ENCODE measurements at regions of chr22 and their contacts with region 1.

Region 1: DNA sequence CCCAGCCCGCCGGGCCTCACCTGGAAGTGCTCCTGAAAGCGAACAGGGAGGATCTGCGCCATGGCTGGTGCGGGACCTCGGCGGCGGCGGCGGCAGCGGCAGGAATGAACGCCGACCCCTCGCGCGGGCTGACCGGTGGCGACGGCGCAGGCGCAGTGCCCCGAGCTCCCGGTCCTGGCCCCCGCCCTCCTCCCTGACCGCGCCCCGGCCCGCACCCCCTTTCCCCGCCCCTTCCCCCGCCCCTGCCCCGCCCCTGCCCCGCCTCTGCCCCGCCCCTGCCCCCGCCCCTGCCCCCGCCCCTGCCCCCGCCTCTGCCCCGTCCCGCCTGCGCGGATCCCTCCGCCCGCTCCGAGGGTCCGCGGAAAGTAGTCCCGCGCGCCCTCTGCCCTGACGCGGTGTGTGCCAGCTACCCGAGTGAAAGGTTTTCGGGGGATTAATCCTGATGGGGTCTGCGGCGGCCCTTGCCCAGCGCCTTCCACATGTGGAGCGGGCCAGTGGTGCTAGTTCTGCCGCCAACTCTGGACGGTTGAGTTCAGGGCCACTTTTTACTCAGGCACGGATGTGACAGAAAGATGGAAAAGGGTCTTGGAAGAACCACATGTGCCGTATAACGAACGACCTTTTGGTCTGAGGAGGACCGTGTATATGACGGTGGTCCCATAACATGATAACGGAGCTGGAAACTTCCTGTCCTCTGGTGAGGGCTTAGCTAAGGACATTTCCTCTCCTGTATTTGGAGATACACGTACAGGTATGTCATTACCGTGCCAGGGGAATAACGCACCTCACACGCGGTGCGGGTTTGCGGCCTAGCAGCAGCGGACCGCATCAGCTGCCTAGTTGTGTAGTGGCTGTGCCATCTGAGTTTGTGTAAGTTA is at the start of gene CLTCL1:
- DNase-seq: peak; percentile 87
- ATAC-seq: peak; percentile 83
- H3K4me3 ChIP-seq: peak within 1 kb of the TSS; percentile 64 to 88 (median 84)
- H3K4me3 Mint-ChIP-seq: peak within 1 kb of the TSS; percentile 97
- H3K27ac ChIP-seq: peak within 1 kb of the TSS; percentile 75 to 77
- H3K27ac Mint-ChIP-seq: peak within 1 kb of the TSS; percentile 94
- H3K4me1 ChIP-seq: peaks cover 15 to 17% of the 10 kb centered on the region in 2 donors
- H3K4me1 Mint-ChIP-seq: peaks cover 24% of the 10 kb centered on the region
- H3K27me3 ChIP-seq: peaks cover 0 to 13% (median 3%) of the 10 kb centered on the region in 4 experiments
- H3K27me3 Mint-ChIP-seq: peaks cover 18% of the 10 kb centered on the region
- CTCF ChIP-seq: no peak
- total RNA-seq, gene CLTCL1: 5.2 and 5.5 TPM in 2 replicates

Region 2: DNA sequence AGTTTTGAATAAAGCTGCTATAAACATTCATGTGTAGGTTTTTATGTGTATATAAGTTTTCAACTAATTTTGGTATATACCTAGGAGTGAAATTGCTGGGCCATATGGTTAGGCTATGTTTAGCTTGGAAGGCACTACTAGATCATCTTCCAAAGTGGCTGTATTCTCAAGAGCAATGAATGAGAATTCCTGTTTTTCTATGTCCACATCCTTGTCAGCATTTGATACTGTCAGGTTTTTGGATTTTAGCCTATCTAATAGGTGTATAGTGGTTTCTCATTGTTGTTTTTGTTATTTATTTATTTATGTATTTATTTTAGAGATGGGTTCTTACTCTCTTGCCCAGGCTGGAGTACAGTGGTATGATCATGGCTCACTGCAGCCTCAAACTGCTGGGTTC is 26.0 kb after region 1 on chr22:
- CTCF ChIA-PET with region 1: no interaction called
- POLR2A ChIA-PET with region 1: no interaction called
- intact Hi-C with region 1: no loop called
- DNase-seq: no peak
- ATAC-seq: no peak
- H3K4me3 ChIP-seq: no peak overlapping the region
- H3K4me3 Mint-ChIP-seq: no peak overlapping the region
- H3K27ac ChIP-seq: no peak overlapping the region
- H3K27ac Mint-ChIP-seq: no peak overlapping the region
- H3K4me1 ChIP-seq: no peaks in the 10 kb centered on the region
- H3K4me1 Mint-ChIP-seq: no peaks in the 10 kb centered on the region
- H3K27me3 ChIP-seq: no peaks in the 10 kb centered on the region
- H3K27me3 Mint-ChIP-seq: no peaks in the 10 kb centered on the region
- CTCF ChIP-seq: no peak

Region 3: DNA sequence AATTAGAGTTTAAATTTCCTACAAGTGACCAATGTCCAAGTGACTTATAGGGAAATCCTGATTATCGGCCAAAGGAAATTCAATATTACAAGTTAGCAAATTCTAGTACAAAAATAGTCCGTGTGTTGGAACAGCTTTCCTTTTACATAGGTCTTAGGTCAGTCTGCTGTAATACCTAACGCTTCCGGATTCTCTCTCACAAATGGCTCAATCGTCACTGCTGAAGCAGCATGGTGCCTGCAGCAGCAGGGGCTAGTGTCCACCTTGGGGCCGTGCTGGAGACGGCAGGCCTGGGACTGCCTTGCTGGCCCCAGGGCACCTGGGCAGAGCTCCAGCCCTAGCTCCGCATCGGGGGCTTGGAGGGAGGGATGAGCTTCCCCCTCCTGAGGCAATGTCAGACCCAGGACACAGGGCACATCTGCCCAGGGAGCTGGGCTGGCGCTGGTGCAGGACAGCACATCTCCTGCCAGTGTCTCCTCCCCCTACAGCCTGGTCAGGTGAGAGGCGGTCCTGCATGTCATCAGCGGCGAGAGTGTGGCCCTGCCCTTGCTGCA is 39.1 kb after region 1 on chr22:
- CTCF ChIA-PET with region 1: no interaction called
- POLR2A ChIA-PET with region 1: no interaction called
- intact Hi-C with region 1: no loop called
- DNase-seq: no peak
- ATAC-seq: no peak
- H3K4me3 ChIP-seq: no peak overlapping the region
- H3K4me3 Mint-ChIP-seq: no peak overlapping the region
- H3K27ac ChIP-seq: no peak overlapping the region
- H3K27ac Mint-ChIP-seq: no peak overlapping the region
- H3K4me1 ChIP-seq: no peaks in the 10 kb centered on the region
- H3K4me1 Mint-ChIP-seq: no peaks in the 10 kb centered on the region
- H3K27me3 ChIP-seq: no peaks in the 10 kb centered on the region
- H3K27me3 Mint-ChIP-seq: no peaks in the 10 kb centered on the region
- CTCF ChIP-seq: no peak

Region 4: DNA sequence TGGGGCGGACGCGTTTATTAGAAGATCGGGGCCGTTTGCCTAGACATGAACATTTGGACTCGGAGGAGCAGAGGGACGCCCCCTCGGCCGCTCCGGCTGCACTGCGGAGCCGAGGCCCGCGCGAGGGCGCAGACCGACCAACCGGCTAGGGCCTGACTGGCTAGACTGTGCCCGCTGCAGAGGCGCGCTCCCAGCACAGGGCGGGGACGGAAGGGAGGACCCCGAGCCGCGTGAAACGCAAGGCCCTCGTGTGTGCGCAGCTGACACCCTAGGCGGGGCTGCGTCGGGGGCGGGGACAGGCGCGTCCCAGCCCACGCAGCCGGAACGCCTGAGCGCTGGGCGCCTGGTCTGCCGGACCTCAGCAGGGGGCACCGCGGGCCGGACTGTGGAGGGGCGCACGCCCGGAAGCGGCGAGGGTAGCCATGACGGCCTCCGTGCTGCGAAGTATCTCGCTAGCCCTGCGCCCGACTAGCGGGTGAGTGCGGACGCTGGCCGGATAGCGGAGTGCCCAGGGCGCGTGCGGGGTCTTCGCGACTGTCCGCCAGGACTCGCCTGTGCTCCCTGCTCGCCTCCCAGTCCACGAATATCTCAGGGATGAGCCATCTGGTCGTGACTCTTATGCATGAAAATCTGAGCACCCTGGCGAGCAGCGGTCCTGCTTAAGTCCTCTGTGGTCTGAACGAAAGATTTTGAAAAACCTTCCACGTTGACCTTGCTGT is 140.5 kb after region 1 on chr22 and contains the start of gene MRPL40:
- CTCF ChIA-PET with region 1: interaction called, 7 read pairs
- POLR2A ChIA-PET with region 1: interaction called, 3 read pairs
- intact Hi-C with region 1: loop called (anchors 5 kb)
- DNase-seq: peak; percentile 90
- ATAC-seq: peak; percentile 87
- H3K4me3 ChIP-seq: peak within 1 kb of the TSS; percentile 73 to 90 (median 85)
- H3K4me3 Mint-ChIP-seq: peak within 1 kb of the TSS; percentile 93
- H3K27ac ChIP-seq: peak within 1 kb of the TSS; percentile 91 to 97
- H3K27ac Mint-ChIP-seq: peak within 1 kb of the TSS; percentile 98
- H3K4me1 ChIP-seq: peaks cover 46 to 63% of the 10 kb centered on the region in 2 donors
- H3K4me1 Mint-ChIP-seq: peaks cover 62% of the 10 kb centered on the region
- H3K27me3 ChIP-seq: no peaks in the 10 kb centered on the region
- H3K27me3 Mint-ChIP-seq: no peaks in the 10 kb centered on the region
- CTCF ChIP-seq: no peak
- total RNA-seq, gene MRPL40: 18.0 and 21.9 TPM in 2 replicates

Region 5: GRCh38 chr22:19576460-19577421 is 284.9 kb after region 1 on chr22:
- CTCF ChIA-PET with region 1: no interaction called
- POLR2A ChIA-PET with region 1: no interaction called
- intact Hi-C with region 1: no loop called
- DNase-seq: no peak
- ATAC-seq: no peak
- H3K4me3 ChIP-seq: no peak overlapping the region
- H3K4me3 Mint-ChIP-seq: no peak overlapping the region
- H3K27ac ChIP-seq: no peak overlapping the region
- H3K27ac Mint-ChIP-seq: no peak overlapping the region
- H3K4me1 ChIP-seq: peaks cover 10 to 12% of the 10 kb centered on the region in 2 donors
- H3K4me1 Mint-ChIP-seq: peaks cover 12% of the 10 kb centered on the region
- H3K27me3 ChIP-seq: peaks cover 0 to 7% (median 2%) of the 10 kb centered on the region in 4 experiments
- H3K27me3 Mint-ChIP-seq: peaks cover 24% of the 10 kb centered on the region
- CTCF ChIP-seq: no peak